Activated CD8-positive, alpha-beta T cell treated with anti-CD3 and anti-CD28 coated beads, Interleukin-2, amount 10 ng/mL, durations not matched to agents 7 days and 5 days (primary cell): ENCODE measurements at regions of chr17 and their contacts with region 1.

Region 1: GRCh38 chr17:43940630-43941029 is 1.6 kb downstream of the PPY start:
- DNase-seq: peak; percentile 37
- ATAC-seq: no peak
- H3K4me3 Mint-ChIP-seq: no peak overlapping the region
- H3K27ac Mint-ChIP-seq: no peak overlapping the region
- H3K4me1 Mint-ChIP-seq: peaks cover 11% of the 10 kb centered on the region
- H3K27me3 Mint-ChIP-seq: peaks cover 19% of the 10 kb centered on the region

Region 2: DNA sequence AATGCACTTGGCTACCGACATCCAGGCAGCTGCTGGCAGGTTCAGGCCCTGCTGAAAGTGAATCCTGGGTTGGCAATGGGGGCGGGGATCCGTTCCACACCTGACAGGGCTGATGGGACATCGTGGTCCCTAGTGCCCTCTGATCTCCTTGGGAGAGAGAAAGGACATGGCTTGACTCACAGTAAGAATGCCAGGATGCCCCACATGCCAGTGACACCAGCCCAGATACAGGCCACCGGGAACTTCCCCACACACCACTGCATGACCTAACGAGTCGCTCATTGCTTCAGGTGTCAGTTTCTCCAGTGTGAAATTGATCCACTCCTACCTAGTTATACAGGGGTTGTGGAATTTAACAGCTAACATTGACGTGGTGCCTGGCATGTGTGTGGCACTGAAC is 86.2 kb before region 1 on chr17:
- CTCF ChIA-PET with region 1: no interaction called
- POLR2A ChIA-PET with region 1: no interaction called
- DNase-seq: no peak
- ATAC-seq: no peak
- H3K4me3 Mint-ChIP-seq: no peak overlapping the region
- H3K27ac Mint-ChIP-seq: no peak overlapping the region
- H3K4me1 Mint-ChIP-seq: no peaks in the 10 kb centered on the region
- H3K27me3 Mint-ChIP-seq: peaks cover 6% of the 10 kb centered on the region

Region 3: GRCh38 chr17:43888548-43888947 is 52.1 kb before region 1 on chr17:
- CTCF ChIA-PET with region 1: no interaction called
- POLR2A ChIA-PET with region 1: no interaction called
- DNase-seq: no peak
- ATAC-seq: no peak
- H3K4me3 Mint-ChIP-seq: no peak overlapping the region
- H3K27ac Mint-ChIP-seq: no peak overlapping the region
- H3K4me1 Mint-ChIP-seq: no peaks in the 10 kb centered on the region
- H3K27me3 Mint-ChIP-seq: peaks cover 8% of the 10 kb centered on the region

Region 4: DNA sequence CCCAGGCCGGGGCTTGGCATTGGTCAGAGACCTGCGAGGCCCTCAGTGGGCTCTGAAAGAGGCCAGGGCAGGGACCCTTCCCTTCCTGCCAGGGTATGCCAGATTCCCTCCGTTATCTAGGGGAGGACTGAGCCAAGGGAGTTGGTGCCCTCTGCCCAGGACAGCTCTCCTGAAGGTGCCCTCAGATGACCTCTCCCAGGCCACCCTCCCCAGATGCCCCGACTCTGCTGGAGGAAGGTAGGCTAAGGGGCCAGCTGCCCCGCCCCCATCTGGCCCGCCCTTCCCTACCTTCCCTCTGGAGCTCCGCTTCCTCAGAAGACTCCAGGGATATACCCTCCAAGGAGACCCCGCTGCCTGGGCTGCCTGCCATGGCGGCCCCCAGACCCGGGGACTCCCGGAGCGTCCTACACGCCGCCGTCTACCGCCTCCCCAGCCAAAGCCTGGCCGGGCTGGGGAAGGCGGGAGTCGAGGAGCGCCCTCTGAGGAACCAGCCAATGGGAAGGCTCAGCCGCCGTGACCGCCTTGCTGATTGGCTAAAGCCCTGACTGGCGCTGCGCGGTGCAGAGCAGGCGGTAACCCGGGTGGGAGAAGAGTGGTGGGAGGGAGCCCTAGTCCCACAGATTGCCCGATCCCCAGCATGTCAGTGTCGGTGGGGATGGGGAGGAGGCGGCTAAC is 40.3 kb before region 1 on chr17:
- CTCF ChIA-PET with region 1: no interaction called
- POLR2A ChIA-PET with region 1: no interaction called
- DNase-seq: peak; percentile 87
- ATAC-seq: peak; percentile 100
- H3K4me3 Mint-ChIP-seq: peak overlapping the region; percentile 68
- H3K27ac Mint-ChIP-seq: no peak overlapping the region
- H3K4me1 Mint-ChIP-seq: peaks cover 8% of the 10 kb centered on the region
- H3K27me3 Mint-ChIP-seq: peaks cover 19% of the 10 kb centered on the region

Region 5: DNA sequence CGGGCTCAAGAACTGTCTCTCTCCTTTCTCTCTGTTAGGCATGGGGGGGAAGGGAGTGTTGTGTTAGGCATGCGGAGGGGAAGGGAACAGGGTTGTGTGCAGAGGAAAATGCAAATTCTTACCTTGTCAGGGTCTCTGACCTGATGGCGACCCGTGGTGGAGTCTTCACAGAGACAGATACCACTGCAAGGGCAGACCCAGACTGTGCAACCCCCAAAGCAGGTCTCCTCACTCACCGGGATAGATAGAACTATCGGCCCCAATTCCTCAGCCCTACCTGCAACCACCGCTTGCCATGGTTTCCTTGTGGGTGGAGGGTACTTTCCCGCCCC is 23.6 kb before region 1 on chr17:
- CTCF ChIA-PET with region 1: interaction called, 17 read pairs
- POLR2A ChIA-PET with region 1: no interaction called
- DNase-seq: no peak
- ATAC-seq: no peak
- H3K4me3 Mint-ChIP-seq: peak overlapping the region; percentile 73
- H3K27ac Mint-ChIP-seq: peak overlapping the region; percentile 80
- H3K4me1 Mint-ChIP-seq: peaks cover 18% of the 10 kb centered on the region
- H3K27me3 Mint-ChIP-seq: peaks cover 2% of the 10 kb centered on the region

Region 6: GRCh38 chr17:43979011-43979410 is 38.4 kb after region 1 on chr17:
- CTCF ChIA-PET with region 1: interaction called, 10 read pairs
- POLR2A ChIA-PET with region 1: no interaction called
- DNase-seq: no peak
- ATAC-seq: no peak
- H3K4me3 Mint-ChIP-seq: no peak overlapping the region
- H3K27ac Mint-ChIP-seq: no peak overlapping the region
- H3K4me1 Mint-ChIP-seq: peaks cover 6% of the 10 kb centered on the region
- H3K27me3 Mint-ChIP-seq: peaks cover 38% of the 10 kb centered on the region

Region 7: GRCh38 chr17:43994272-43995149 is 53.9 kb after region 1 on chr17:
- CTCF ChIA-PET with region 1: interaction called, 42 read pairs
- POLR2A ChIA-PET with region 1: no interaction called
- DNase-seq: peak; percentile 72
- ATAC-seq: peak; percentile 91
- H3K4me3 Mint-ChIP-seq: no peak overlapping the region
- H3K27ac Mint-ChIP-seq: no peak overlapping the region
- H3K4me1 Mint-ChIP-seq: no peaks in the 10 kb centered on the region
- H3K27me3 Mint-ChIP-seq: peaks cover 34% of the 10 kb centered on the region

Region 8: GRCh38 chr17:44170499-44171201 is 230.0 kb after region 1 on chr17 and contains the start of gene ASB16:
- CTCF ChIA-PET with region 1: interaction called, 15 read pairs
- POLR2A ChIA-PET with region 1: no interaction called
- DNase-seq: no peak
- ATAC-seq: no peak
- H3K4me3 Mint-ChIP-seq: no peak within 1 kb of the TSS
- H3K27ac Mint-ChIP-seq: no peak within 1 kb of the TSS
- H3K4me1 Mint-ChIP-seq: peaks cover 7% of the 10 kb centered on the region
- H3K27me3 Mint-ChIP-seq: no peaks in the 10 kb centered on the region
- total RNA-seq, gene ASB16: 0.26 to 0.42 TPM

Region 9: DNA sequence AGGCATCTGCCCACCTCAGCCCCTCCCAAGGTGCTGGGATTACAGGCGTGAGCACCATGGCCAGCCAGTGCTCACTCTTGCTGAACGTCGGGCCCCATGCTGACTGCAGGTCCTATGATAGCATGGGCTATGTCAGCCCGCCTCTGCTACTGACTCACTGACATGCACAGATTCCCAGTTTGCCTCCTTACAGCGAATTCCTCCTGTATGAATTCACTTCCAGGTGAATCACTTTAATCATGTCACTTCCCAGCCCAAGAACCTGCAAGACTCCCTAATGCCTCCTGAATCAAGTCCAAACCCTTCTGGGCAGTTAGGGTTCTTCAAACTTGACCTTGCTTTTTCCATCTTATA is 294.9 kb after region 1 on chr17:
- CTCF ChIA-PET with region 1: no interaction called
- POLR2A ChIA-PET with region 1: no interaction called
- DNase-seq: no peak
- ATAC-seq: no peak
- H3K4me3 Mint-ChIP-seq: no peak overlapping the region
- H3K27ac Mint-ChIP-seq: no peak overlapping the region
- H3K4me1 Mint-ChIP-seq: peaks cover 12% of the 10 kb centered on the region
- H3K27me3 Mint-ChIP-seq: peaks cover 5% of the 10 kb centered on the region